ENCODE measurements at regions of chr14 and their contacts with region 1.

Region 1: DNA sequence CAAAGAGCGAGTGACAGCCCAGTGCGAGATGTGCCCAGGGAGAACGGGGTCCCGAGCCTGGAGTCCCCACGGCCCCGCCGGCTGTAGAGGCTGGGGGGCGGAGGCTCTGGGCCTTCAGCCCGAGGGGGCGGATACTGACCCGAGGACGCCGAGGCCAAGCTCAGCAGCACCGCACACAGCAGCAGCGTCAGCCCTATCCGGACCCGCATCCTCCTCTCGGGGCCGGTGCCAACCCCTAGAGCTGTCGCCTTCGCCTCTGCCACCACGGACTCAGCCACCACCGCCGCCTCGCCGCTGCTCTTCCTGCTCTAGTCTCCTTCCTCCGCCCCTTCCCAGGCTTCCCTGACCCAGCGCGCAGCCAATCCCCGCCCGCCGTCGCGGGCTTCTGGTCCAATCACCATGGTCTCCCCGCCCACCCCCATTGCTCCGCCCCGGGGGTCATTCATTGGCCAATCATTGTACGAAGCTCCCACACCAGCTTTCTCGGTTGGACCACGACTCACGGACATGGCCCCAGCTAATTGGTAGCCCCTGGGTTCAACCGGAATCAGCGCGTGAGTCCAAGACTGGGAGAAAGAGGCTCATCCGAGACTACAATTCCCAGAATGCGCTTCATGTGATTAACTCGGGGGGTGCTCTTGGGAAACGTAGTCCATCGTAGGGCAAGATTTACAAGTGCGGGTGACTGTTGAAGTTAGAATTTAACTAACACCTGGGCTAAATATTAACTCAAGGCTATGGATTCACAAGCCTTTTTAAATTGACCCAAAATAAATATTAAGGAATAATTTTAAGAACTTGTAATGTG is at the start of gene SEL1L:
- DNase-seq: peak; percentile 97 to 100 (median 99)
- ATAC-seq: peak; percentile 95
- H3K4me3 ChIP-seq: peak within 1 kb of the TSS; percentile 89
- H3K4me3 Mint-ChIP-seq: peak within 1 kb of the TSS; percentile 96
- H3K27ac ChIP-seq: peak within 1 kb of the TSS; percentile 62 to 64
- H3K27ac Mint-ChIP-seq: peak within 1 kb of the TSS; percentile 84
- H3K4me1 ChIP-seq: peaks cover 19% of the 10 kb centered on the region
- H3K4me1 Mint-ChIP-seq: peaks cover 70% of the 10 kb centered on the region
- H3K27me3 ChIP-seq: no peaks in the 10 kb centered on the region
- H3K27me3 Mint-ChIP-seq: no peaks in the 10 kb centered on the region
- CTCF ChIP-seq: no peak
- total RNA-seq, gene SEL1L: 40.6 to 46.4 TPM

Region 2: DNA sequence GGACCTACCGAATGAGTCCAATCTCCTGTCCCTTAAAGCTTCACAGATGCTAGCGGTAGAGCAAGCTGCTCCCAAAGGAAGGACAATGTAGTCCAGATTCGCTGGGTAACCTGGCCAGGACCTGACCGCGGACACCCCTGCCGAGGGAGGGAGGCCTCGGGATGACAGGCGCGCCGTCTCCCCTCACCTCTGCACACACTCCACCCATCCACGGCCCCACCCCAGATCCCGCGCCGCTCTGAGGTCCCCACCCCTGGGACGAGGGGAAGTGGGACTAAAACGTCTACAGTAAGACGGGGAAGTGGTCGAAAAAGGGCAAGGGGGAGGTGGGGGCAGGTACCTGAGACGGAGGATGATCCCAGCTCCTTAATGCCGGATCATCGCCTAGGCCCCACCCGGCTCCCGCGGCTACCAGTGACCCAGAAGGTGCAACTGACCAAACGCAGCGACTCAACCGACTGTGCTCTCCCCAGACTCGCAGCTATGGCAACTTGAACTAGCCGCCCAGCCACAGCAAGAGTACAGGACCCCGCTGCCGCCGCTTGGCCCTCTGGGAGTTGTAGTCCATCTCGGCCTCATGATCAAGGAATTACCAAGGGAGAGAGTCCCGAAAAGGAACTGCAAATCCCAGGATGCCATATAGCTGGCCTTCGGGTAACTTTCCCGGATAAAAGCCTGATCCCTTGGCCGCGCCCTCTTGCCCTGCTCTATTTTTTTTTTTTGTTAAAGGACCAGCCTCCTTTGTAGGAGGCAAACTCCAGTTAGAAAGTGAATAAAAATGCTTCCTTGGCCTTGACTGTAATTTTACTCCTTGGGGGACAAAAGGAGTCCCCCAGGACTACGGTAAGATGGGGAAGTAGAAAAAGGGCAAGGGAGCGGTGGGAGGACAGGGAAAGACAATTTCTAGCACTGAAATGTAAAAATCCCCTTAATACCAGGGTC is 592.2 kb before region 1 on chr14 and contains the start of gene CEP128:
- CTCF ChIA-PET with region 1: no interaction called
- POLR2A ChIA-PET with region 1: no interaction called
- intact Hi-C with region 1: loop called in 1 of 2 experiments (anchors 5 kb)
- DNase-seq: peak; percentile 68 to 92 (median 78)
- ATAC-seq: peak; percentile 82
- H3K4me3 ChIP-seq: peak within 1 kb of the TSS; percentile 65
- H3K4me3 Mint-ChIP-seq: peak within 1 kb of the TSS; percentile 93
- H3K27ac ChIP-seq: peak within 1 kb of the TSS; percentile 15 to 18
- H3K27ac Mint-ChIP-seq: peak within 1 kb of the TSS; percentile 87
- H3K4me1 ChIP-seq: peaks cover 17% of the 10 kb centered on the region
- H3K4me1 Mint-ChIP-seq: peaks cover 33% of the 10 kb centered on the region
- H3K27me3 ChIP-seq: no peaks in the 10 kb centered on the region
- H3K27me3 Mint-ChIP-seq: peaks cover 4% of the 10 kb centered on the region
- CTCF ChIP-seq: no peak
- total RNA-seq, gene CEP128: 12.3 to 13.0 TPM

Region 3: DNA sequence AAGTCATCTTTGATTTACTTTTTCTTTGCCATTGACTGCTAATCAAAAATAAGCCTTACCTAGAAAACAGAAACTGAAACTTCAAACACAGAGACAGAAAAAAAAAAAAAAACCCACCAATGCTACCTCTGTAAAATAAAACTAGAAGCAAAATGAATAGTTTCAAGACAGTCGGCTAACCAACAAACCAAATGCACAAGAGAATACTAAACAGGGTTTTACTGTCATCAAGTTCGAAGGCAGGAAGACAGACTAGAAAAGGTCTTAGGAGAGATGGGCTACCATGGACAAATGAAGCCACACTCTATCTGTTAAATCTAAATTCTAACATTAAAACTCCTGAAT is 59.6 kb before region 1 on chr14:
- CTCF ChIA-PET with region 1: no interaction called
- POLR2A ChIA-PET with region 1: interaction called, 6 read pairs
- intact Hi-C with region 1: loop called in 1 of 2 experiments (anchors 2 kb)
- DNase-seq: peak in 3 of 14 experiments; percentile 23 to 60 (median 30)
- ATAC-seq: peak; percentile 54
- H3K4me3 ChIP-seq: peak overlapping the region; percentile 23
- H3K4me3 Mint-ChIP-seq: peak overlapping the region; percentile 72
- H3K27ac ChIP-seq: peak overlapping the region; percentile 26 to 65
- H3K27ac Mint-ChIP-seq: peak overlapping the region; percentile 86
- H3K4me1 ChIP-seq: peaks cover 2% of the 10 kb centered on the region
- H3K4me1 Mint-ChIP-seq: peaks cover 33% of the 10 kb centered on the region
- H3K27me3 ChIP-seq: no peaks in the 10 kb centered on the region
- H3K27me3 Mint-ChIP-seq: no peaks in the 10 kb centered on the region
- CTCF ChIP-seq: no peak

Region 4: GRCh38 chr14:81519200-81520011 is 14.3 kb before region 1 on chr14:
- CTCF ChIA-PET with region 1: no interaction called
- POLR2A ChIA-PET with region 1: interaction called, 20 read pairs
- intact Hi-C with region 1: no loop called
- DNase-seq: peak in 3 of 14 experiments; percentile 38 to 44 (median 42)
- ATAC-seq: peak; percentile 56
- H3K4me3 ChIP-seq: no peak overlapping the region
- H3K4me3 Mint-ChIP-seq: peak overlapping the region; percentile 6
- H3K27ac ChIP-seq: peak overlapping the region; percentile 37 to 42
- H3K27ac Mint-ChIP-seq: peak overlapping the region; percentile 81
- H3K4me1 ChIP-seq: peaks cover 13% of the 10 kb centered on the region
- H3K4me1 Mint-ChIP-seq: peaks cover 52% of the 10 kb centered on the region
- H3K27me3 ChIP-seq: no peaks in the 10 kb centered on the region
- H3K27me3 Mint-ChIP-seq: no peaks in the 10 kb centered on the region
- CTCF ChIP-seq: no peak